ENCODE measurements at regions of chr7 and their contacts with region 1.

Region 1: DNA sequence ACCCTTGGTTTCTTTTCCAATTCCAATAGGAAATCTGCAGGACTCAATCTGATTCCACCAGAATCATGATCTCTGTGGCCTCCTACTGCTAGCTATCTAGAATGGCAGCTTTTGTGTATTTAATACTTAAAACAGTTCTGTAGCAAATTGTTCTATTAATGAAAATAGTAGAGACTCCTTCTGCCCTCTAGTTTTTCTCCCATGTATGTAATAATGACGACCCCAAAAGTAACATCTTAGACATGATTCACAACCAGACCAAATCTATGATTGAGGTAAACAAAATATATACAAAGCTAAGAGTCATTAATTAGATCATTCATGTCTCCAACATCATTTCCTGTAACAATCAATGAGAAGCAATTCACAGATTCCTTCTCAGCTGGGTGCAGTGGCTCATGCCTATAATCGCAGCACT is 259.1 kb upstream of the MKLN1 start:
- DNase-seq: no peak
- H3K4me3 Mint-ChIP-seq: no peak overlapping the region
- H3K27ac Mint-ChIP-seq: no peak overlapping the region
- H3K4me1 Mint-ChIP-seq: peaks cover 45% of the 10 kb centered on the region
- H3K27me3 Mint-ChIP-seq: no peaks in the 10 kb centered on the region

Region 2: GRCh38 chr7:131039355-131039762 is 29.3 kb before region 1 on chr7:
- CTCF ChIA-PET with region 1: no interaction called
- POLR2A ChIA-PET with region 1: no interaction called
- DNase-seq: no peak
- H3K4me3 Mint-ChIP-seq: no peak overlapping the region
- H3K27ac Mint-ChIP-seq: no peak overlapping the region
- H3K4me1 Mint-ChIP-seq: peaks cover 38% of the 10 kb centered on the region
- H3K27me3 Mint-ChIP-seq: no peaks in the 10 kb centered on the region

Region 3: DNA sequence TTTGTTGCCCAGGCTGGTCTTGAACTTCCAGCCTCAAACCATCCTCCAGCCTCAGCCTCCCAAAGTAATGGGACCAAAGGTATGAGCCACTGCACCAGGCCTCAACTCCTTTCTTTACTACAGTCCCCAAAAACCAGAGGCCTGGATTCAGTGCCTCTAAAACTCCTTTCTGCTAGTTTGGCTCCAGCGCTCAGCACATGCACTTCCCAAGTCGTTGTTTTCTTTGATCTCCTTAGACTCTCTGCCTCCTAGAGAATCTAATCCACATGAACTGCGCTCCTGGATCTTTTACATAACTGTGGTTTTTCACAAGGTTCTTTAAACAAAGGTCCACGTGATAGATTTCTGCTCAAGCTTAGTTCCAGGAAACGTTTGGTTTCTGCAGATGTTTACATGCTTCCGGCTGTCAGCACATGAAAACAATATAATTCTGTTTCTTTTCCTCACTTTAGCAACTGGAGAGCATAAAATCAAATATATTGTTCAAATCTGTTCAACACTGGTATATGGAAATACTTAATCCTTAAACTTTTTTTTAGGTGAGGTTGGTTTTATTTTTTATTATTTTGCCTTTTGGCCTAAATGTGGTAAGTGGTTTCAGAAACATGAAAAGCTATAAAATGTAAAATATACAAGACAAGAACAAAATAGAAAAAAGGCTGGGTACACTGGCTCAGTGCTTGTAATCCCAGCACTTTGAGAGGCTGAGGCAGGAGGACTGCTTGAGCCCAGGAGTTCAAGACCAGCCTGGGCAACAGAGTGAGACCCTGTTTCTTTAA is 11.4 kb before region 1 on chr7:
- CTCF ChIA-PET with region 1: interaction called, 38 read pairs
- POLR2A ChIA-PET with region 1: interaction called, 6 read pairs
- DNase-seq: peak; percentile 68
- H3K4me3 Mint-ChIP-seq: peak overlapping the region; percentile 65
- H3K27ac Mint-ChIP-seq: peak overlapping the region; percentile 94
- H3K4me1 Mint-ChIP-seq: peaks cover 71% of the 10 kb centered on the region
- H3K27me3 Mint-ChIP-seq: no peaks in the 10 kb centered on the region

Measured in activated CD4-positive, alpha-beta T cell treated with anti-CD3 and anti-CD28 coated beads, Interleukin-2, amount 10 ng/mL, durations not matched to agents 7 days and 5 days (primary cell).